Heart right ventricle (tissue), 16 donors: ENCODE measurements at regions of chr16 and their contacts with region 1.

Region 1: GRCh38 chr16:54503011-54503855 is 216.6 kb upstream of the IRX3 start:
- DNase-seq: peak; percentile 71 to 75
- ATAC-seq: peak; percentile 72 to 97 (median 88)
- H3K4me3 ChIP-seq: no peak overlapping the region
- H3K27ac ChIP-seq: peak overlapping the region; percentile 3 to 81 (median 63)
- H3K4me1 ChIP-seq: peaks cover 8 to 67% (median 47%) of the 10 kb centered on the region in 9 donors
- H3K27me3 ChIP-seq: no peaks in the 10 kb centered on the region
- CTCF ChIP-seq: no peak

Region 2: GRCh38 chr16:54355251-54355650 is 148.0 kb before region 1 on chr16:
- intact Hi-C with region 1: no loop called
- DNase-seq: no peak
- ATAC-seq: no peak
- H3K4me3 ChIP-seq: no peak overlapping the region
- H3K27ac ChIP-seq: no peak overlapping the region
- H3K4me1 ChIP-seq: no peaks in the 10 kb centered on the region
- H3K27me3 ChIP-seq: peaks cover 0 to 7% (median 0%) of the 10 kb centered on the region in 7 donors
- CTCF ChIP-seq: no peak

Region 3: GRCh38 chr16:54407596-54407995 is 95.6 kb before region 1 on chr16:
- intact Hi-C with region 1: loop called in 1 of 10 experiments (anchors 5 kb)
- DNase-seq: no peak
- ATAC-seq: peak in 1 of 8 donors; percentile 58
- H3K4me3 ChIP-seq: no peak overlapping the region
- H3K27ac ChIP-seq: no peak overlapping the region
- H3K4me1 ChIP-seq: peaks cover 0 to 36% (median 8%) of the 10 kb centered on the region in 9 donors
- H3K27me3 ChIP-seq: no peaks in the 10 kb centered on the region
- CTCF ChIP-seq: no peak

Region 4: GRCh38 chr16:54422569-54422978 is 80.7 kb before region 1 on chr16:
- intact Hi-C with region 1: loop called in 2 of 10 experiments (anchors 5 to 10 kb)
- DNase-seq: no peak
- ATAC-seq: peak in 7 of 8 donors; percentile 32 to 69 (median 43)
- H3K4me3 ChIP-seq: no peak overlapping the region
- H3K27ac ChIP-seq: peak overlapping the region in 9 of 10 donors; percentile 52 to 84 (median 74)
- H3K4me1 ChIP-seq: peaks cover 0 to 33% (median 10%) of the 10 kb centered on the region in 9 donors
- H3K27me3 ChIP-seq: no peaks in the 10 kb centered on the region
- CTCF ChIP-seq: no peak

Region 5: GRCh38 chr16:54437401-54437800 is 65.8 kb before region 1 on chr16:
- intact Hi-C with region 1: no loop called
- DNase-seq: no peak
- ATAC-seq: no peak
- H3K4me3 ChIP-seq: no peak overlapping the region
- H3K27ac ChIP-seq: no peak overlapping the region
- H3K4me1 ChIP-seq: no peaks in the 10 kb centered on the region
- H3K27me3 ChIP-seq: no peaks in the 10 kb centered on the region
- CTCF ChIP-seq: no peak

Region 6: GRCh38 chr16:54447591-54448440 is 55.4 kb before region 1 on chr16:
- intact Hi-C with region 1: loop called in 1 of 10 experiments (anchors 5 kb)
- DNase-seq: no peak
- ATAC-seq: peak in 1 of 8 donors; percentile 12
- H3K4me3 ChIP-seq: no peak overlapping the region
- H3K27ac ChIP-seq: peak overlapping the region in 1 of 10 donors; percentile 58
- H3K4me1 ChIP-seq: peaks cover 0 to 18% (median 6%) of the 10 kb centered on the region in 9 donors
- H3K27me3 ChIP-seq: no peaks in the 10 kb centered on the region
- CTCF ChIP-seq: no peak

Region 7: DNA sequence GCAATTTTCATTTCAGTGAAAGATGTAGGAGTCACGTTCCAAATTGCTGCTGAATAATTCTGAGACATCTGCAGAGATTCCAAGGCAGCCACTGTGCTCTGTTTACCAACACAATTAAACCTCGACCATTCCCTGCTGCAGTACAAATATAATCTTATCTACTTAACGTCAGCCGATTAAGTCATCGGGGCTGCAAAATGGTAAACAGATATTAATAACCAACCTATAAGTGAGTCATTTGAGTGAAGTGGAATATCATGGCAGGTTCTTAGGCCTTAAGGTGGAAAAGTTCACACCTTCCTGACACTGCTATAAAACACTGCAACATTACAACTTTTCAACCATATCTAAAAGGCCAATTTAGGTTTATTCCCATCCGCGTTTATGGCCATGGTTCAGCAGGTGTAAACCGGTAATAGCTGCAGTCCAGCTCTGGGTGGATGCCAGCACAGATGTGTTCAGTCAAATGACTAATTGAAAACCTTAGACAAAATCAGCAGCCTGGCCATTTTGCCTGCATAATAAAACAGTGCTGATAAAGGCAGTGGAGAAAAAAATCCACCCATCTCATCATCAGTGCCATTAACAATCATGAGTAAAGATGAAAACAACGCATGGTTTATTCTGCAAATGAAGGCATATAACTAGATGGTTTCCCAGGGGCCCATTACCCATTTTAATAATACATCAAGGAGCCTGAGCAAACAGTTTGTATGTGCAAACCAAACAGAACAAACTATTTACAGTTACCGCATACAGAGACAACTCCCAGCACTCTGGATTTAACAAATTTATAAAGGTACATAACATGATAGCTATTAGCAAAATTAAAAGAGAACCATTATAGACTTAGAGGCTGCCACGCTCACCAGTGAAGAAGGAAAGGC is 13.8 kb before region 1 on chr16:
- intact Hi-C with region 1: loop called in 1 of 10 experiments (anchors 2 kb)
- DNase-seq: no peak
- ATAC-seq: peak in 5 of 8 donors; percentile 29 to 74 (median 61)
- H3K4me3 ChIP-seq: no peak overlapping the region
- H3K27ac ChIP-seq: peak overlapping the region in 8 of 10 donors; percentile 29 to 69 (median 52)
- H3K4me1 ChIP-seq: peaks cover 6 to 48% (median 24%) of the 10 kb centered on the region in 9 donors
- H3K27me3 ChIP-seq: no peaks in the 10 kb centered on the region
- CTCF ChIP-seq: no peak

Region 8: GRCh38 chr16:54657058-54657708 is 153.9 kb after region 1 on chr16:
- intact Hi-C with region 1: loop called in 2 of 10 experiments (anchors 10 kb)
- DNase-seq: no peak
- ATAC-seq: peak in 4 of 8 donors; percentile 22 to 88 (median 48)
- H3K4me3 ChIP-seq: no peak overlapping the region
- H3K27ac ChIP-seq: no peak overlapping the region
- H3K4me1 ChIP-seq: peaks cover 10 to 37% (median 28%) of the 10 kb centered on the region in 9 donors
- H3K27me3 ChIP-seq: peaks cover 0 to 9% (median 0%) of the 10 kb centered on the region in 7 donors
- CTCF ChIP-seq: no peak

Region 9: DNA sequence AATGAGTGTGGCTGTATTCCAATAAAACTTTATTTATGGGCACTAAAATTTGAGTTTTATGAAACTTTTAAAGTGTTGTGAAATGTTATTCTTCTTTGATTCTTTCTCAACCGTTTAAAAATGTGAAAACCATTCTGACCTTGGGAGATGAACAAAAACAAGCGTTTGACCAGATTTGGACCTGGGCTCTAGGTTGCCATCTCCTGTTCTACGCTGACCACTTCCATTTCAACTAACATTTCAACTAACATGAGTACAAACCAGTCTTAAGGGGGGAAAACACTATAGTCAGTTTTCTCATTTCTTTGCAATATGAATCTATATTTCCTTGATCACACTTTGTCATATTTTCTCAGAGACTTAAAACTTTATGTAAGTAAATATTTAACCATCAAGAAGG is 309.0 kb after region 1 on chr16:
- intact Hi-C with region 1: loop called in 1 of 10 experiments (anchors 10 kb)
- DNase-seq: no peak
- ATAC-seq: peak in 1 of 8 donors; percentile 59
- H3K4me3 ChIP-seq: no peak overlapping the region
- H3K27ac ChIP-seq: no peak overlapping the region
- H3K4me1 ChIP-seq: no peaks in the 10 kb centered on the region
- H3K27me3 ChIP-seq: no peaks in the 10 kb centered on the region
- CTCF ChIP-seq: peak in 6 of 9 donors; percentile 30 to 57 (median 48)